Activated T-helper 1 cell treated with anti-CD3 and anti-CD28 coated beads, Interleukin-12 subunit alpha, Interleukin-12 subunit beta, Interleukin-2, Interleukin-4 antibody, amounts not matched to agents 30 ng/mL and 10 ng/mL and 1 ng/mL, durations not matched to agents 14 hours and 24 hours and 36 hours (primary cell): ENCODE measurements at regions of chr11 and their contacts with region 1.

Region 1: DNA sequence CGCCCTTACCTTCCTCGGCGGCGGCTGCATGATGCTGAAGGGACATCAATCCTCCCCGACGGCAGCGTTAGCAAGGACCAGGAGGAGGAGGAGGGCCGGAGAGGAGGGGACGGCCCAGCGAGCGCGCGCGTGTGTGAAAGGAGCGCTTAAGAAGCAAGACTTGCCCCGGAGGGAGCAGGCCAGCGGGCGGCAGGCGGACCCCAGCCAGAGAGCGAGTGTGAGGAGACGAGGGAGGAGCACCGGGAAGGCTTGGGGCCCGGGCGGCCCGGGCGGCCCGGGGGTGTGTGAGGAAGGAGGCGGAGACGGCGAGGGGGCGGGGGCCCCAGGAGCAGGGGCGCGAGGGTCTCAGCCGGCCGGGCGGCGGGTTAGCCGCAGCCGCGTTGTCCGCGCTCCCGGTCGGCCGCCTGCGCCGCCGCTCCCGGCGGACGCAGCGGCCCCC is 251 bp downstream of the FCHSD2 start:
- DNase-seq: peak; percentile 61
- H3K4me3 Mint-ChIP-seq: peak overlapping the region; percentile 99
- H3K27ac Mint-ChIP-seq: peak overlapping the region; percentile 96
- H3K4me1 Mint-ChIP-seq: peaks cover 56% of the 10 kb centered on the region
- H3K27me3 Mint-ChIP-seq: no peaks in the 10 kb centered on the region

Region 2: DNA sequence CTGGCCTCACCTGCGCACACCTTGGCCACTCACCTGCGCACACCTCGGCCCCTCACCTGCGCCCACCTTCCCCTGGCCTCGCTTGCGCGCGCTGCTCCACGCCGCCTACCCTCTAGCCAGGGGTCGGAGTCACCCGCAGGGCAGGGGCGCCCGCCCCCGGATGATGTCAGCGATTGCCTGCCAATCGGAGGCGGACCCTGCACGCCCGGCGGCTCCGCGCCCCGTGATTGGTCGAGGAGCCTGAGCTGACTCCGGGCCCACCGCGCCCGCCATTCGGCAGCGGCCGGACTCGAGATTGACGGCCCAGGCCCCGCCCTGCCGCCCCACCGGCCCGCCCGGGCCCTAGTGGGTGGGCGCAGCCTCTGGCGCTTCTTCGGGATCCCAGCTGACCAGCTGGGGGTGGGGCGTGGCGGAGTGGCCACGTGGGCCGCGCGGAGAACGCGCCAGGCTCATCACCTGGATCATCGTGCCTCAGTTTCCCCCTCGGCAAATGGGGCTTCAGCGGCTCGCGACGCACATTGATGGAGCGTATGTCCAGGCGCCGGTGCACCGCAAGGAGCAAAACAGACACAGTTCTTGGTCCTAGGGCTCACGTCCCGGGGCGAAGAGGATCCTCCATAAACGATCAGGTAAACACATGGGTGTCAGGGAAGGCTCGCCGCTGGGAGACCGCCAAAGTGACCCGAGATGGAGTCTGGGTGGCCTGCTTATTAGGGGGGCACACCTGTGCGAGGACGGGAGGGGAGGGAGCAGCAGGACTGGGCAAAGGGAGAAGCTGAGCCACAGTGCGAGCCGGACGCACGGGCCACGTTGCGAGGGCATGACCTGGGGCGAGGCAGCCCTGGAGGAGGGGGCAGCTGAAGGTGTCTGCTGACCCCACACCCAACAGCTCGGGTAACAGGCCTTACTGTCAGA is 1693.4 kb before region 1 on chr11 and contains the start of gene DHCR7:
- intact Hi-C with region 1: loop called (anchors 10 kb)
- DNase-seq: peak; percentile 96
- H3K4me3 Mint-ChIP-seq: peak within 1 kb of the TSS; percentile 92
- H3K27ac Mint-ChIP-seq: peak within 1 kb of the TSS; percentile 93
- H3K4me1 Mint-ChIP-seq: peaks cover 62% of the 10 kb centered on the region
- H3K27me3 Mint-ChIP-seq: no peaks in the 10 kb centered on the region
- total RNA-seq, gene DHCR7: 100 and 106 TPM in 2 replicates

Region 3: DNA sequence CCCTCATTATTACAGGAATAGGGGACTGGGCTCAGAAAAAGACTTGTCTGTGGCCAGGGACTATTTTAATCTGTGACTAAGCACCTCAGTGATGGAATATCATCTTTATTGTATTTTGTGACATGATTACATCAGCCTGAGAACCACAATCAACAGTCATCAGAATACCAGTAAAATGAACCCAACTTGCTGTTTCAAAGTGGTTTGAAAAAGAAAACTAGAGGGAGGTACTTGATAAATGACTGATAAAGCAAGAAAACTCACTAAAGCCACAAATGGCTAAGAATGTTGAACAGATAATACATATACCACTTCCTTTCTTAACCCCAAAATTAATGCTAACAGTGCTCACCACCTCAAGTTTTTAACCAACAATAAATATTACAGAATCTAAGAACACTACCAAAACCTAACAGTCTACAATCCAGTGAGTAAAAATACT is 172.0 kb before region 1 on chr11:
- intact Hi-C with region 1: loop called (anchors 1 kb)
- DNase-seq: no peak
- H3K4me3 Mint-ChIP-seq: peak overlapping the region; percentile 48
- H3K27ac Mint-ChIP-seq: peak overlapping the region; percentile 79
- H3K4me1 Mint-ChIP-seq: peaks cover 78% of the 10 kb centered on the region
- H3K27me3 Mint-ChIP-seq: no peaks in the 10 kb centered on the region

Region 4: DNA sequence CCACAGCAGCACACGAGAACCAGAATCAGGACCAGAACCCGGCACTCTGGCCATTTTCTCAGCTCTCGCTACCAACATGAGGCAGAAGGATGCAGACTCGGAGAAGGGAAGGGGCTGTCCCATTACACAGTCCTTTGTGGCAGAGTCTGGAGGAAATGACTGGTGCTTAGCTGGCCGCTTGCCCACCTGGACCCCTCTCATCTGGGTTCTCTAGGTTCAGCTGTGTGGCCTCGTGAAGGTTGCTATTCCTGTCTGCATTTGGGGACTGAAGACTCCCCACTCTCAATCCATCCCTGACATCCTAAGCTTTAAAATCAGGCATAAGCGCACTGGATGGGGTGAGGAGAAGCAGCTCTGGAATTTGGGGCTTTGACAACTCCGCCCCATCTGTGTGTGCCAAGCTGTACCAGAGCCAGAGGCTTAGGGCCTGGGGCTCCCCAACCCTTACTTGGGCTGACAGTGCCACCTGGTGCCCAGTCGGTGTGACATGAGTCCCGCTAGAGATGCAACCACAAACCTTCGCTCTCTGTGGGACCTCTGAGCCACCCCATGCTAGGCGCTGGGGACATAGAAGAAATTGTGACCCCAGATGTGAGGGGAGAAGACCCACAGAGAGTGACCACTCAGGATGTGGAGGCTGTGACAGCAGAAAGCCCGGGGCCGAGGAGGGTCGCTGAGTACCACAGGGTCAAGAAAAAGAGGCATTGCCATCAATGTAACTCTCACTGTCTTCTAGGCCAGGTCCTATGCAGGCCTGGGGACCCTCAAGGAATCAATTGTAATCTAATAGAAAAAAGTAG is 36.1 kb after region 1 on chr11:
- intact Hi-C with region 1: loop called (anchors 1 kb)
- DNase-seq: peak; percentile 68
- H3K4me3 Mint-ChIP-seq: no peak overlapping the region
- H3K27ac Mint-ChIP-seq: no peak overlapping the region
- H3K4me1 Mint-ChIP-seq: peaks cover 30% of the 10 kb centered on the region
- H3K27me3 Mint-ChIP-seq: peaks cover 20% of the 10 kb centered on the region

Region 5: GRCh38 chr11:73597956-73598718 is 456.3 kb after region 1 on chr11 and contains the start of gene FAM168A:
- intact Hi-C with region 1: loop called (anchors 1 kb)
- DNase-seq: peak; percentile 88
- H3K4me3 Mint-ChIP-seq: peak within 1 kb of the TSS; percentile 93
- H3K27ac Mint-ChIP-seq: peak within 1 kb of the TSS; percentile 94
- H3K4me1 Mint-ChIP-seq: peaks cover 37% of the 10 kb centered on the region
- H3K27me3 Mint-ChIP-seq: peaks cover 2% of the 10 kb centered on the region
- total RNA-seq, gene FAM168A: 19.4 and 19.5 TPM in 2 replicates

Region 6: GRCh38 chr11:74948898-74949747 is 1807.3 kb after region 1 on chr11 and contains the starts of genes SPCS2 and XRRA1:
- intact Hi-C with region 1: loop called (anchors 10 kb)
- DNase-seq: peak; percentile 98
- H3K4me3 Mint-ChIP-seq: peak within 1 kb of the TSS; percentile 96
- H3K27ac Mint-ChIP-seq: peak within 1 kb of the TSS; percentile 96
- H3K4me1 Mint-ChIP-seq: peaks cover 46% of the 10 kb centered on the region
- H3K27me3 Mint-ChIP-seq: no peaks in the 10 kb centered on the region
- total RNA-seq, gene SPCS2: 167 and 172 TPM in 2 replicates
- total RNA-seq, gene XRRA1: 8.6 and 9.0 TPM in 2 replicates